ENCODE measurements at regions of chr4 and their contacts with region 1.

Region 1: GRCh38 chr4:162461952-162462351 is 298.2 kb upstream of the FSTL5 start:
- DNase-seq: no peak
- H3K4me3 ChIP-seq: no peak overlapping the region
- H3K4me3 Mint-ChIP-seq: no peak overlapping the region
- H3K27ac Mint-ChIP-seq: no peak overlapping the region
- H3K4me1 ChIP-seq: no peaks in the 10 kb centered on the region
- H3K4me1 Mint-ChIP-seq: no peaks in the 10 kb centered on the region
- H3K27me3 ChIP-seq: no peaks in the 10 kb centered on the region
- H3K27me3 Mint-ChIP-seq: no peaks in the 10 kb centered on the region
- CTCF ChIP-seq: no peak

Region 2: GRCh38 chr4:162366146-162366545 is 95.8 kb before region 1 on chr4:
- CTCF ChIA-PET with region 1: no interaction called
- POLR2A ChIA-PET with region 1: no interaction called
- intact Hi-C with region 1: loop called (anchors 5 kb)
- DNase-seq: no peak
- H3K4me3 ChIP-seq: no peak overlapping the region
- H3K4me3 Mint-ChIP-seq: no peak overlapping the region
- H3K27ac Mint-ChIP-seq: no peak overlapping the region
- H3K4me1 ChIP-seq: no peaks in the 10 kb centered on the region
- H3K4me1 Mint-ChIP-seq: no peaks in the 10 kb centered on the region
- H3K27me3 ChIP-seq: no peaks in the 10 kb centered on the region
- H3K27me3 Mint-ChIP-seq: no peaks in the 10 kb centered on the region
- CTCF ChIP-seq: no peak

Region 3: DNA sequence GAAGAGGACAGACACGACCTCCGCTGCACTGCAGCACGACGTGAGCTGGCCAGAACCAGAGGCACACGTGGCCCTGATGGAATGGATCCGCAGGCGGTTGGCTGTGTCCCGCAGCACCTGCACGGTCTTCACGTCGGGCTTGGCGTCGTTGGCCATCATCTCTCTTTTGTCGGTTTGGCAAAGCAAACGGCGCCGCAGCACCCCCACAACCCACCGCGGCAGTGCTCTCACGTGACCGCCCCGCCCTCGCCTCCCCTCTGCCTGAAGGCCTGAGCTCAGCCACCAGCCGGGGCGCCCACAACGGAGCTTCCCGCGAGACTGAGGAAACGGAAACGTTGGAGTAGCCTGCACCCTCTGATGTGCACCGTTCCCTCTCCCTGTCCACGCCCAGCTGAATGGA is 1011.6 kb after region 1 on chr4 and contains the start of gene TKTL2:
- CTCF ChIA-PET with region 1: no interaction called
- POLR2A ChIA-PET with region 1: no interaction called
- intact Hi-C with region 1: no loop called
- DNase-seq: no peak
- H3K4me3 ChIP-seq: no peak within 1 kb of the TSS
- H3K4me3 Mint-ChIP-seq: no peak within 1 kb of the TSS
- H3K27ac Mint-ChIP-seq: no peak within 1 kb of the TSS
- H3K4me1 ChIP-seq: no peaks in the 10 kb centered on the region
- H3K4me1 Mint-ChIP-seq: no peaks in the 10 kb centered on the region
- H3K27me3 ChIP-seq: no peaks in the 10 kb centered on the region
- H3K27me3 Mint-ChIP-seq: no peaks in the 10 kb centered on the region
- CTCF ChIP-seq: no peak
- total RNA-seq, gene TKTL2: not detected in 2 replicates